Right cardiac atrium (tissue), 5 donors: ENCODE measurements at regions of chr7 and their contacts with region 1.

Region 1: DNA sequence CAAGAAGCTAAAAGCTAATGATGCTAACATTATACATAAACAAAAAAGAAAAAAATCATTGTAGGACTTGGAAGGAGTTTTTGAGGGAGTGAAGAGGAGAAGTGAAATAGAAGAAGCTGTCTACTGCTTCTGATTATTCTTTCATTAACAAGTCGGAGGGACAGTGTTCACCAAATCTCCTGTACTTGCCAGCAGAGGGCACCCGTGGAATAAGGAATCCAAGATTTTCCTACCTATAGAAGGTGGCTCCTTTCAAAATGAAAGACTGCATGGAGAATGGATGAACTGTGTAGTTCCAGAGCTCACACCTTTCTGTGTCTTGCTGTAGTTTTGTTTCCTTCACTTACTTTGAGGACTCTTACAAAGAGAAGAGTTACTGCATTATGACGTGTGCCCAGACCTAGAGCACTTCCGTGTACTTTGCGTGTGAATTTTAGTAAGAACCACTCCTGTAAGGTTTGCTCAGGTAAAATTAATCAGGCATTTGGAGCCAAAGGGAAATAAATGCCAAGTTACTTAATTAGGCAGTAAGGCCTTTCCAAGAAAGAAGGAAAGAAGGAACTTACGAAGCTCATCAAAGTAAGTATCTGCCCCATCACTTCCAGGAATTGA is 145.1 kb downstream of the SEMA3D start:
- DNase-seq: peak; percentile 59 to 80 (median 64)
- ATAC-seq: peak; percentile 61 to 68
- H3K4me3 ChIP-seq: no peak overlapping the region
- H3K27ac ChIP-seq: no peak overlapping the region
- H3K4me1 ChIP-seq: no peaks in the 10 kb centered on the region
- H3K27me3 ChIP-seq: no peaks in the 10 kb centered on the region

Region 2: DNA sequence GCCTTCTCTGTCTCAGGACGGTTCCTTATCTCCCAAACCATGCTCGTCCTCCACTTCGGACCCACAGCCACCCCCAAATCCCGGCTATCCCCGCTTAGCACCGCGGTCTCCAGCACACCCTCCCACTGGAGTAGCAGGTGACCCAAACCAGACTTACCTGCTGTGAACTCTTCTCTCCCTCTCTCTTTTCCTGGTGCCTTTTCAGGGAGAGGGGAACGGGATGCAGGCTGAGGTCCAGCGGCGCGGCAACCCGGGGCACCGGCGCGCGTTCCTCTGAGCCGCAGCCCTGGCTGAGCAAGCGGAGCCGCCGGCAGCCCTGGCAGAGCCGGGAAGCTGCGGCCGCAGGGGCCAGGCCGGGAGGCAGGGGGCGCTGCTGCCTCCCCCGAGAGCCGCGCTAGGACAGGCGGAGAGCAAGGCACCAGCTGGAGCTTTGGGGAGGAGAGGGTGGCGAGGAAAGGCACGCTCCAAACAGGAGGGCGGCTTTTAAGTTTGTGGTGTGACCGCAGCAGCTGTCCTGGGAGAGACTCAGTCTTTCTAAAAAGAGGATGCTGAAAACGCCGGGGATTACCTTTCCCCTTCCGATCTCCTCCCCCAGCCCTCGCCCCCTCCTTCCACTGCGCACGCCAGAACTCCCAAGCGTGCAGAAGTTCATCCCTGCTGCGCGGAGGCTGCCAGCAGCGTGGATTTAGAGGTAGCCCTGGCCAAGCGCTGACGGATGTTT is 145.0 kb after region 1 on chr7 and contains the start of gene SEMA3D:
- intact Hi-C with region 1: loop called in 3 of 4 experiments (anchors 2 to 10 kb)
- DNase-seq: peak; percentile 77 to 90 (median 89)
- ATAC-seq: peak; percentile 96 to 98
- H3K4me3 ChIP-seq: peak within 1 kb of the TSS; percentile 52
- H3K27ac ChIP-seq: no peak within 1 kb of the TSS
- H3K4me1 ChIP-seq: no peaks in the 10 kb centered on the region
- H3K27me3 ChIP-seq: no peaks in the 10 kb centered on the region
- total RNA-seq, gene SEMA3D: 1.3 to 3.1 (median 2.2) TPM

Region 3: DNA sequence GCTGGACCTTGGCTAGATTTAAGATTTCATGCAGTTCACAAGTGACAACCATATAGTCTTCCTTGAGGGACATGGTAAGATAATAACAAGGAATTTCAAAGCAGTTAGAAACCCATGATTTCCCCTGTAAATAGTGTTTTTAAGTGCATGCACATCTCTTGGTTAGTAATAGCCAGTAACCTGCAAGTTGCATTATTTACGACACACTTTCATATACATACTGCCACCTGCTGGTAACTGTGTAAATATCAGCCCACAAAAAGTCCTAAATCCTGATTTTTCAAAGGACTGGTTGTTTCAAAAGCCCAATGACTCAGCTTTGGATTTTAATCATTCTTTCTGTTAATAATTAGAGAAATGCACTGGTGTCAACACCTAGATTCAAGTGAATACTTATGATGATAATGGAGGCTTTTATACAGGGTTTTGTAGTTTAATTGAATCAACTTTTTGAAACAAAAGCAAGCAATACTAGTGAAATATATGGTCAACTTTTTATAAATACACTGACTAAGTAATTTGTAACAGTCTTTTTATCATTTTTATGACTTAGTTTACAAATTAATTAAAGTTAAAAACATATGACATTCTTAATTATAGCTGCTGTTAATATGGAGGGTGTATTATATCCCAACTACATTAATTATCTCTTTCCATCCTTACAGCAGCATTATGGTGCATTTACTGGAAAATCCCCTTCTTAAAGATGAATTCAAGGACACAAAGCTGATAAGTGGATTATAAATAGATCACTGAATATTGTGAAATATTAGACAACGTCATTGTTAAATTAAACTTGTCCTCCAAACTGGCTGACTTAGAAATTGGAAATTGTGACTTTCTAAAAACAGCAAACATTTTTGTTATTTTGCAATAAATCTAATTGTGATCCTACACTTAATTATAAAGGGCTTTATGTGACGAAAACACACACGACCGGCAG is 512.8 kb after region 1 on chr7:
- intact Hi-C with region 1: loop called (anchors 5 to 10 kb)
- DNase-seq: no peak
- ATAC-seq: peak in 1 of 2 donors; percentile 31
- H3K4me3 ChIP-seq: no peak overlapping the region
- H3K27ac ChIP-seq: no peak overlapping the region
- H3K4me1 ChIP-seq: no peaks in the 10 kb centered on the region
- H3K27me3 ChIP-seq: no peaks in the 10 kb centered on the region

Region 4: GRCh38 chr7:85737426-85737825 is 695.7 kb after region 1 on chr7:
- intact Hi-C with region 1: no loop called
- DNase-seq: no peak
- ATAC-seq: no peak
- H3K4me3 ChIP-seq: no peak overlapping the region
- H3K27ac ChIP-seq: no peak overlapping the region
- H3K4me1 ChIP-seq: no peaks in the 10 kb centered on the region
- H3K27me3 ChIP-seq: no peaks in the 10 kb centered on the region